Activated B cell treated with CpG ODN at 0.5 μM for 24 hours (primary cell): ENCODE measurements at regions of chr17 and their contacts with region 1.

Region 1: DNA sequence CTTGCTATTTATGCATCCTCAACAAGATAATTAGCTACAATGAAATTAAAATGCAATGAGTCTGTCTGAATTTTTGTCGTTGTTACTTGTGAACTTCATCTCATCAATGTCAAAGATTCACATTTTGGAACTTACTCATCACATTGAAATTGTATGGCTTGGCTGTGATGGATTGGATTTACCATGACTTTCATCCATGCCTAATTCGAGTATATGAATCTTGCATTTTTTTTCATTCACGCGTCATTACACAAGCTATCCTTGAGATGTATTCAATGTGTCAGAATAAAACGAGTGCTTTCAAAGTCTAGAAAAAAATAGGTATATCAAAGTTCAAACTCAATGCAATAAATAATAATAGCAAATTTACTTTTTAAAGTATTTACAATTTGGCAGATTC is 265.3 kb downstream of the MAP2K6 start:
- DNase-seq: no peak
- ATAC-seq: no peak
- H3K4me3 Mint-ChIP-seq: no peak overlapping the region
- H3K27ac Mint-ChIP-seq: no peak overlapping the region
- H3K4me1 Mint-ChIP-seq: no peaks in the 10 kb centered on the region
- H3K27me3 Mint-ChIP-seq: peaks cover 2% of the 10 kb centered on the region
- CTCF ChIP-seq: no peak

Region 2: GRCh38 chr17:68670967-68671693 is 1008.7 kb before region 1 on chr17:
- CTCF ChIA-PET with region 1: no interaction called
- POLR2A ChIA-PET with region 1: no interaction called
- intact Hi-C with region 1: no loop called
- DNase-seq: no peak
- ATAC-seq: no peak
- H3K4me3 Mint-ChIP-seq: no peak overlapping the region
- H3K27ac Mint-ChIP-seq: no peak overlapping the region
- H3K4me1 Mint-ChIP-seq: no peaks in the 10 kb centered on the region
- H3K27me3 Mint-ChIP-seq: peaks cover 10% of the 10 kb centered on the region
- CTCF ChIP-seq: no peak

Region 3: GRCh38 chr17:69655902-69656301 is 23.9 kb before region 1 on chr17:
- CTCF ChIA-PET with region 1: no interaction called
- POLR2A ChIA-PET with region 1: no interaction called
- intact Hi-C with region 1: loop called (anchors 1 kb)
- DNase-seq: no peak
- ATAC-seq: no peak
- H3K4me3 Mint-ChIP-seq: no peak overlapping the region
- H3K27ac Mint-ChIP-seq: no peak overlapping the region
- H3K4me1 Mint-ChIP-seq: no peaks in the 10 kb centered on the region
- H3K27me3 Mint-ChIP-seq: peaks cover 1% of the 10 kb centered on the region
- CTCF ChIP-seq: no peak